ENCODE measurements at regions of chr2 and their contacts with region 1.

Region 1: GRCh38 chr2:246489-247144 is 17.2 kb downstream of the SH3YL1 start:
- DNase-seq: peak; percentile 75
- H3K4me3 ChIP-seq: no peak overlapping the region
- H3K27ac ChIP-seq: peak overlapping the region; percentile 16; the same call in 1 of the 2 replicates
- H3K4me1 ChIP-seq: peaks cover 5% of the 10 kb centered on the region; the same call in 1 of the 2 replicates
- H3K27me3 ChIP-seq: no peaks in the 10 kb centered on the region

Region 2: GRCh38 chr2:648476-649424 is 402.1 kb after region 1 on chr2:
- in situ Hi-C with region 1: loop called (anchors 10 kb)
- DNase-seq: no peak
- H3K4me3 ChIP-seq: no peak overlapping the region
- H3K27ac ChIP-seq: no peak overlapping the region
- H3K4me1 ChIP-seq: 0 out of 2 replicates have a peak, but pooled peaks cover 4% of the 10 kb centered on the region
- H3K27me3 ChIP-seq: no peaks in the 10 kb centered on the region